ENCODE measurements at regions of chr1 and their contacts with region 1.

Region 1: DNA sequence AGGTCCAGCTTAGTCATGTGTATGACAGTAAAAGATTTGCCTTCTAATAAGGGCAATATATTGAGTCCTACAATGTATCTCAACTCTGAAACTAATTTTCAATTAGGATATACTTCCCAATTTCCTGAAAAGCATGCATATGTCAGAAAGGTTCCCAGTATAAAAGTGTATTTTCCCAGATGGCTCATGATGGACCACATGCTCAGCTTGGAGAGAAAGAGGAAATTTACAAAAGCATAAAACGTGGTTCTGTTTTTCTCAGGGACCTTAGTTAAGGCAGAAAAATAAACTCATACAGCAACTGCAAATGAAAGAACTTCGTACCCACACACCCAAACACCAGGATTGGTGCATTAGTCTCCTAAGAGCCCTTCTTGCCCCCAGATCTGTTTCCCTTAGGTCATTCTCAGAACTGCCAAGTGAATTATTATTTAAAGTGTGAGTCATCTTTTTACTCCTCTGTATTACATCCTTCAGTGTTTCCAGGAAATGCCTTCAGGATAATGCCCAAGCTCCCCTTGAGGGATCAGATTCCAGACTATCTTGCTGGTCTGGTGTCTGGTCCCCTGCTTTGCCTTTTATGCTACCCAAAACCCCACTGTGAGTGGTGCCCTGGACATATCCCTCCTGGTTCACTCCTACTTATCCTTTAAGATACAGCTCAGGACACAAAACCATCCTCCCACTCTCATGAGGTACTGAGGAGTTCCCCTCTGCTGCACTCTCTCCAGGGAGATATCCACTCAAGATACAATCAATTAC is 57.4 kb downstream of the SSX2IP start:
- DNase-seq: peak; percentile 25 to 70
- ATAC-seq: peak; percentile 94 to 97
- H3K4me3 ChIP-seq: no peak overlapping the region
- H3K27ac ChIP-seq: peak overlapping the region; percentile 68 to 79
- H3K4me1 ChIP-seq: peaks cover 18% of the 10 kb centered on the region
- CTCF ChIP-seq: no peak
- EP300 ChIP-seq: no peak
- POLR2A ChIP-seq: no peak
- RAD21 ChIP-seq: no peak

Region 2: DNA sequence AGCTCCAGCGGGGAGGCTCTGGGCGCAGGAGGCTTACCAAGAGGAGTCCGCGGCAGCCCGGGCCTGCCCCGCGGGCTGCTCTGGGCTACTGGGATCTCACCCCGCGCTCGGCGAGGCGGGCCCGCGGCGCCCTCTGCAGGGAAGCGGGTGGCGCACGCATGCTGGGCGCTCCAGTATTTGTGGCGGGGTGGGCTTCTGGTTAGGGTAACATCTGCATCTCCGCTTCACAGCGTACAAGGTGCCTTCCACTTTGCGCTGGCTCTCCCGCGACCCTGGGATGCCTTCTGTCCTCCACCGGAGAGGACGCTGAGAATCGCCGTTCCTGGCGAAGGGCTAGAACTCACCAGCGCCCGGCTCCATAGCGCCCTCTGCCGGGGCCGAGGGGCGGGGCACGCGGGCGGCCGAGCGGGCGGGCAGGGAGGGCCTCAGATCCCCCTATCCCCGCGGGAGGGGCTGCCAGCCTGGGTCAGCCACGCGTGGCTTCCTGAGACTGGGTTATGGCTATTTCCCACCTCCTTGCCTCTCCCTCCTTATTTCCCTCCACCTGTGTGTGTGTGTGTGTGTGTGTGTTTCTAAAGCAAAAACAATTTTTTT is 12.0 kb before region 1 on chr1:
- CTCF ChIA-PET with region 1: interaction called, 15 read pairs
- POLR2A ChIA-PET with region 1: no interaction called
- DNase-seq: peak; percentile 44 to 80
- ATAC-seq: peak; percentile 98
- H3K4me3 ChIP-seq: peak overlapping the region; percentile 48
- H3K27ac ChIP-seq: peak overlapping the region; percentile 78 to 97
- H3K4me1 ChIP-seq: peaks cover 12% of the 10 kb centered on the region; the same call in 1 of the 3 replicates
- CTCF ChIP-seq: peak; percentile 98
- EP300 ChIP-seq: no peak
- POLR2A ChIP-seq: peak; percentile 32
- RAD21 ChIP-seq: peak; percentile 50 to 84; a peak in 4 of 5 replicates

Measured in A549 (cell line).